Activated T-helper 1 cell treated with anti-CD3 and anti-CD28 coated beads, Interleukin-12 subunit alpha, Interleukin-12 subunit beta, Interleukin-2, Interleukin-4 antibody, amounts not matched to agents 30 ng/mL and 10 ng/mL and 1 ng/mL, durations not matched to agents 14 hours and 24 hours and 36 hours (primary cell): ENCODE measurements at regions of chr16 and their contacts with region 1.

Region 1: GRCh38 chr16:55543472-55543871 is 23.0 kb upstream of the CAPNS2 start:
- DNase-seq: no peak
- H3K4me3 Mint-ChIP-seq: no peak overlapping the region
- H3K27ac Mint-ChIP-seq: no peak overlapping the region
- H3K4me1 Mint-ChIP-seq: no peaks in the 10 kb centered on the region
- H3K27me3 Mint-ChIP-seq: no peaks in the 10 kb centered on the region

Region 2: GRCh38 chr16:55048745-55049144 is 494.7 kb before region 1 on chr16:
- intact Hi-C with region 1: no loop called
- DNase-seq: no peak
- H3K4me3 Mint-ChIP-seq: no peak overlapping the region
- H3K27ac Mint-ChIP-seq: no peak overlapping the region
- H3K4me1 Mint-ChIP-seq: no peaks in the 10 kb centered on the region
- H3K27me3 Mint-ChIP-seq: no peaks in the 10 kb centered on the region

Region 3: GRCh38 chr16:55643161-55643970 is 99.9 kb after region 1 on chr16:
- intact Hi-C with region 1: no loop called
- DNase-seq: no peak
- H3K4me3 Mint-ChIP-seq: no peak overlapping the region
- H3K27ac Mint-ChIP-seq: no peak overlapping the region
- H3K4me1 Mint-ChIP-seq: no peaks in the 10 kb centered on the region
- H3K27me3 Mint-ChIP-seq: no peaks in the 10 kb centered on the region

Region 4: DNA sequence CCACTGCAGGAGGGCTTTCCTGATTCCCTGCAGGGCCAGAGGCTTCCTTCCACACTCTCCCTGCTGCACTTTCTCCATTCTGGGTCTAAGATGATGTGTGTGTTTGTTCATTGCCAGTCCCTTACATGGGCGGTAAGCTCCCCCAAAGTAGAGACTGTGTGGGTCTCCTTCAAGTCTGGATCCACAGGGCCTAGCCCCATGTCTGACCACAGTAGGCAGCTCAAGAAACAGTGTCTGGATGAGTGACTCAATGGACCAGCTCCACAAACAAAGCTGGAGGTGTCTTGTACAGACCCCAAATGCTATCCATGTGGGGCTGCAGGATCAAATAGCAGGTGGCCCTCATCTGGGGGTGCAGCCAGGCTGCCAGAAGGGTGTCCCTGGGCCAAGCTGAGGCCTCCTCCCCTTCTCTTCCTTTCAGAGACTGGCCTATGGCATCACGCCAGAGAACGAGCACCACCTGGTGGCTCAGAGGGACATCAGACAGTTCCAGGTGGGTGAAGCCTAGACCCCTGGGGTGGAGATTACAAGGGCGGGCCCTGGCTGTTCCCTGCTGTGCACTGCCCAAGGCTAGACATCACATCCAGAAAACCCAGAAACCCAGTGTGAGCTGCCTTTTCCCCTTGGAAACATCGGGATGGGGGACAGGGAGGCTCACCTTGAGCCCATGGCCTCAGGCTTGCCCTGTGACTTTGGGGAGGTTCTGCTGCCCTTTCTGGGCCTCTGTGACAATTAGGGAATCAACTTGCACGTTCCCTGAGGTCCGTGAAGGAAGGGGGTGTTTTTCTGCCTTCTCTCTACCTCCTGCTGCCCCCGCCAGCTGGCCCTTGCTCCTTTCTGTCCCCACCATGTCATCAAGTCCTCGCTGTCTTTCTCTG is 158.2 kb after region 1 on chr16:
- intact Hi-C with region 1: loop called (anchors 5 kb)
- DNase-seq: peak; percentile 2
- H3K4me3 Mint-ChIP-seq: no peak overlapping the region
- H3K27ac Mint-ChIP-seq: no peak overlapping the region
- H3K4me1 Mint-ChIP-seq: peaks cover 12% of the 10 kb centered on the region
- H3K27me3 Mint-ChIP-seq: peaks cover 10% of the 10 kb centered on the region

Region 5: DNA sequence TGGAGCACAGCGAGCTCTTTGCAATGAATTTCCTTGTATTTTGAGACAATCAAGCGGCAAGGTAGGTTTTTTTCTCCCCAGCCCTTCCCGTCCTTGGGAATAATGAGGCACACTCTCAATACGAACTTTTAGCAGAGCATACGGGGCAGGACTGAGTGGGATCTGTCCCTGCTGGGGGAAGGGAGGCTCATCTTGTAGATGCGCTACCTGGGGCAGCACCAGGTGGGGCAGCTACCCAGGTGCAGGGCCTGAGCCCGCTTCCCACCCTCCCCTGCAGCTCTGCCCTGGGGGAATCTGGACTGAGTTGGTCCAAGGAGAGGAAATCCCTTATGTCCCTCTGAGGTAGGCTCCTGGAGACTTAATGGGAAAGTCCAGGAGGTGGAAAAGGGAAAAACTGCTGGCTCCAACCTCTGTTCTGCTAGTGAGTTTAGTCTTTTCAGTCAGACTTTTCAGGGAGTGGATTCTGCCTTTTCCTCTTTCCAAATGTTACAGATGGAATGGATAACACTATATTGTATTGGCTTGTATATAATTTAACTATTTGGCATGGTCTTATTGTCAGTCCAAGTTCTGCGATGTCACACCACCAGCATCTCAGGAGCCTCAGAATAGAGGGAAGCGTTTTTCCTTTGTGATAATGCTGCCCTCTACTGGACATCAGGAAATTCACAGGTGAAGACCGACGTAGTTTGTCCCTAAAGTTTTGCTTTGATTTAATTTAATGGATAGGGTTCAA is 299.1 kb after region 1 on chr16:
- intact Hi-C with region 1: loop called (anchors 10 kb)
- DNase-seq: no peak
- H3K4me3 Mint-ChIP-seq: no peak overlapping the region
- H3K27ac Mint-ChIP-seq: no peak overlapping the region
- H3K4me1 Mint-ChIP-seq: no peaks in the 10 kb centered on the region
- H3K27me3 Mint-ChIP-seq: peaks cover 7% of the 10 kb centered on the region

Region 6: GRCh38 chr16:55901566-55902217 is 358.2 kb after region 1 on chr16:
- intact Hi-C with region 1: no loop called
- DNase-seq: no peak
- H3K4me3 Mint-ChIP-seq: no peak overlapping the region
- H3K27ac Mint-ChIP-seq: no peak overlapping the region
- H3K4me1 Mint-ChIP-seq: no peaks in the 10 kb centered on the region
- H3K27me3 Mint-ChIP-seq: peaks cover 4% of the 10 kb centered on the region